Naive thymus-derived CD8-positive, alpha-beta T cell (primary cell): ENCODE measurements at regions of chr2 and their contacts with region 1.

Region 1: DNA sequence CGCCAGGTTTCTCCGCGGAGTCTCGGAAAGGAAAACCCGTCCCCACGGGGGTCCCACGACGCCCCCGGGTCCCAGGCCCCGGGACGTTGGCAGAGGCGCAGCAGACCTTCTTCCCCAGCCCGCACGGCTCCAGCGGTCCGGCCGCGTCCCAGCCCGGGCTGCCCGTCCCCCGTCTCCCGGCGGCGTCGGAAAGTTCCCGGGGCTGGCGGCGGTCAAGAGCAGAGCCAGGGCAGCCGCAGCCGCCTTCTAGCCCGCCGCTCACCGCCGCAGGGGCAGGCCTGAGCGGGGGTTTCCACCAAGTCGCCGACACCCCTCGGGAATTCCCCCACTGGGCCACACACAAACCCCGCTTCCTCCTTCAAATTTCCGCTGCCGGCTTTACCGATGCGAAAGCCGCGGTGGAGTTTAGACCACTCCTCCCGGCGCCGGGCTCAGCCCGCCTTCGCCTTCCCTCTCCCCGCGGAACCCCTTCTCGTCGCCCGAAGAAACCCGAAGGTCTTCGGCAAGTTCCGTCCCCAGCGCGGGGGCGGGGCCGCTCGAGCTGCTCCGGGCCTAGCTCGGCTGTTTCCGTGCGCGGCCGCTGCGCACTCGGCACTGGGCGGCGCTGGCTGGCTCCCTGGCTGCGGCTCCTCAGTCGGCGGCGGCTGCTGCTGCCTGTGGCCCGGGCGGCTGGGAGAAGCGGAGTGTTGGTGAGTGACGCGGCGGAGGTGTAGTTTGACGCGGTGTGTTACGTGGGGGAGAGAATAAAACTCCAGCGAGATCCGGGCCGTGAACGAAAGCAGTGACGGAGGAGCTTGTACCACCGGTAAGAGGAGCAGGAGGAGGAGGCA is at the start of gene CREB1:
- DNase-seq: peak; percentile 99 to 100 (median 100)
- ATAC-seq: peak; percentile 82 to 84
- H3K4me3 Mint-ChIP-seq: peak within 1 kb of the TSS; percentile 85 to 100 (median 96)
- H3K27ac Mint-ChIP-seq: peak within 1 kb of the TSS; percentile 98 to 100 (median 99)
- H3K4me1 Mint-ChIP-seq: peaks cover 31 to 74% (median 60%) of the 10 kb centered on the region in 4 donors
- H3K27me3 Mint-ChIP-seq: peaks cover 0 to 4% (median 0%) of the 10 kb centered on the region in 5 donors
- polyA plus RNA-seq, gene CREB1: 58.5 to 71.4 (median 63.3) TPM

Region 2: DNA sequence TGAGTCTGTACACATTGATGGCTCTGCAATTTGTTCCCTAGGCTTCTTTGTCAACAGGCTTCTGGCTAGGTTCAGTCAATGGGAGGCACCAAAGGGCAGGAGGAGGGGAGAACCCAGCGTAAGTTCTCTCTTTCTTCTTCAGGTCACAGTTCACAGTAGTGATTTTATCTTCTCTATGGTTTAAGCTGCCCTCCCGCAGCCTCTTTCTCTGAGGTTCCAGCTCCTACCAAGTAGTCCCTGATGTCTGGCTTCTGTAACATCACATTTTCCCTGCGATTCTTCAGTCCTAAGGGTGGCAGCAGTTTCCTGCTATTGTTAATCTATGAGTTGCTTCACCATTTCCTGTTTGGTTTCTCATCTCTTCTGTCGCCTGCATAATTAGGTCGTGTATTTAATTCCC is 482.8 kb before region 1 on chr2:
- POLR2A ChIA-PET with region 1: no interaction called
- DNase-seq: peak in 8 of 10 donors; percentile 1 to 60 (median 32)
- ATAC-seq: peak; percentile 87 to 98
- H3K4me3 Mint-ChIP-seq: peak overlapping the region in 5 of 10 donors; percentile 0 to 55 (median 13)
- H3K27ac Mint-ChIP-seq: peak overlapping the region in 8 of 10 donors; percentile 3 to 82 (median 28)
- H3K4me1 Mint-ChIP-seq: peaks cover 5 to 16% (median 10%) of the 10 kb centered on the region in 4 donors
- H3K27me3 Mint-ChIP-seq: peaks cover 0 to 1% (median 0%) of the 10 kb centered on the region in 5 donors

Region 3: GRCh38 chr2:207166039-207166348 is 363.6 kb before region 1 on chr2:
- POLR2A ChIA-PET with region 1: interaction called, 47 read pairs
- DNase-seq: peak; percentile 85 to 99 (median 98)
- ATAC-seq: peak; percentile 83 to 86
- H3K4me3 Mint-ChIP-seq: peak overlapping the region; percentile 91 to 99 (median 96)
- H3K27ac Mint-ChIP-seq: peak overlapping the region; percentile 95 to 100 (median 98)
- H3K4me1 Mint-ChIP-seq: peaks cover 27 to 59% (median 44%) of the 10 kb centered on the region in 4 donors
- H3K27me3 Mint-ChIP-seq: no peaks in the 10 kb centered on the region

Region 4: DNA sequence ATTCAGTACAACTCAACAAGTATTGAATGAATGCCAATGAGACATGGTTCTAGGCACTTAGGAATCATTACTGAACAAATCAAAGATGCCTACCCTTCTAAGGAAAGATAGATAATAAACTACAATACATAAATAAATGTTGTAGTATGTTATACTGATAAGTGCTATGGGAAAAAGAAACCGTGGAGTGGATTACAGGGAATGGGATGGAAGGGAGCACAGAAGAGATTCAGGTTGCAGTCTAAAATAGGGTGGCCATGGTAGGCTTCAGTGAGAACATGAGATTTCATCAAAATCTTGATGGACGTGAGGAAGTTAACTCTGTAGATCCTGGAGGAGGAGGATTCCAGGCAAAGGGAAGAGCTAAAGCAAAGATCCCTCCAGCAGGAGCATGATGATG is 17.7 kb before region 1 on chr2:
- POLR2A ChIA-PET with region 1: interaction called, 20 read pairs
- DNase-seq: no peak
- ATAC-seq: no peak
- H3K4me3 Mint-ChIP-seq: no peak overlapping the region
- H3K27ac Mint-ChIP-seq: peak overlapping the region in 1 of 10 donors; percentile 40
- H3K4me1 Mint-ChIP-seq: peaks cover 2 to 4% (median 3%) of the 10 kb centered on the region in 4 donors
- H3K27me3 Mint-ChIP-seq: no peaks in the 10 kb centered on the region

Region 5: DNA sequence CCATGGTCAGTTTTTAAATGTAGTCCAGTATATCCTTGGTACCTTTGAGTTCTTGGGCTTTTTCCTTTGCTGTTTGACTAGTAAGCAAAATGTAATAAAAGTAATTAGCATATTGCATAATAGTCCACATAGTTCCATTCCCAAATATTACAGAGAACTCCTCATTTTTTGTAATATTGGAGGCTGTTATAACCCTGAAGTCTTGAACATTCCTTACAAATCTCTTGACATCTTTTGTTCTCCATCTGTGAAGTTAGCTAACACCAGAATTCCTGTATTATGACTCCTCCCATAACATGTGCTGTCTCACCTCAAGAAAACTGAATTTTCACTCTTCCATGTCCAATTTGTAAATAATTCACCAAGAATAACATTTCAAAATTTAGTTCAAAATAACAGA is 17.3 kb after region 1 on chr2:
- POLR2A ChIA-PET with region 1: interaction called, 34 read pairs
- DNase-seq: no peak
- ATAC-seq: no peak
- H3K4me3 Mint-ChIP-seq: peak overlapping the region in 2 of 10 donors; percentile 3 to 10
- H3K27ac Mint-ChIP-seq: peak overlapping the region in 2 of 10 donors; percentile 13 to 24
- H3K4me1 Mint-ChIP-seq: peaks cover 24 to 85% (median 72%) of the 10 kb centered on the region in 4 donors
- H3K27me3 Mint-ChIP-seq: no peaks in the 10 kb centered on the region

Region 6: DNA sequence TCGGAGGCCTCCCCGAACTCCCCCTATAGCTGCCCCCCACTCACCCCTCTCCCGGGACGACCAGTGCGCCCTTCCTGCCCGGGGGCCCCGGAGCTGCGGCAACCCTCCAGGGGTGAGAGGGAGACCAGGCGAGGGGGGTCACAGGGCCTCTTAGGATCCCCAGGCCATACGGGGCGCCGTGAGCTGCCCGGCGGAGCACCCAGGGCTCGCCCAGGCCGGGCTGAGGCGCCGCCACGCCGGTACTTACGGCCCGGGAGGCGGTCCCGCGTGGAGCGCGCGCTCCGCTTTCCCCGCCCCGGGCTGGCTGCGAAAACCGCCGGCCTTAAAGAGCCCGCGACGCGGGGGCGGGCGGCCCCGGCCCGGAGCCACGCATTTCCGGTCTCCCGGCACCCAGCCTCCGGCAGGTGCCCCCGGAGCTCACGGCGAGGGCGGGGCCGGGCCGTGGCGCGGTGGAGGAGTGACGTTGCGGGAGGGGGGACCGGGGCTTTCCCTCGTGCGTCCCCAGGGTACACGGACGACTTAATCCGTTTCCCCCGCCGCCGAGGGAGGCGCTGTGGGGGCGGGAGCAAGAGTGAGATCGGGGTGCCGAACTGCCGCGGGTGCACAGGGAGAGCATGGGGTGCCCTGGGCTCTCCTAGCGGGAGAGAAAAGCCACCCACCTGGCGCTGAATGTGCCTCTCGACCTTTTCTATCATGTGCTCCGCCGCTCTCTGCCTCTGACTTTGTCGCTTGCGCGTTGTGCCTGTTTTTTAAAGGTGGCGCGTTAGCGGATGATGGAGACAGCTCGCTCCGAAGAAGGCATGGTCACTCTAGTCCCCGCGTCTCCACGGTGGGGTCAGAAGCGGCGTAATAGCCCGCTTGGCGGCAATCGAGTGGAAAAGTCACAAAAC is 95.7 kb after region 1 on chr2 and contains the start of gene METTL21A:
- POLR2A ChIA-PET with region 1: interaction called, 115 read pairs
- DNase-seq: peak; percentile 89 to 96 (median 94)
- ATAC-seq: peak; percentile 73 to 79
- H3K4me3 Mint-ChIP-seq: peak within 1 kb of the TSS; percentile 83 to 96 (median 94)
- H3K27ac Mint-ChIP-seq: peak within 1 kb of the TSS; percentile 23 to 98 (median 97)
- H3K4me1 Mint-ChIP-seq: peaks cover 19 to 50% (median 46%) of the 10 kb centered on the region in 4 donors
- H3K27me3 Mint-ChIP-seq: no peaks in the 10 kb centered on the region
- polyA plus RNA-seq, gene METTL21A: 34.2 to 50.4 (median 39.4) TPM

Region 7: DNA sequence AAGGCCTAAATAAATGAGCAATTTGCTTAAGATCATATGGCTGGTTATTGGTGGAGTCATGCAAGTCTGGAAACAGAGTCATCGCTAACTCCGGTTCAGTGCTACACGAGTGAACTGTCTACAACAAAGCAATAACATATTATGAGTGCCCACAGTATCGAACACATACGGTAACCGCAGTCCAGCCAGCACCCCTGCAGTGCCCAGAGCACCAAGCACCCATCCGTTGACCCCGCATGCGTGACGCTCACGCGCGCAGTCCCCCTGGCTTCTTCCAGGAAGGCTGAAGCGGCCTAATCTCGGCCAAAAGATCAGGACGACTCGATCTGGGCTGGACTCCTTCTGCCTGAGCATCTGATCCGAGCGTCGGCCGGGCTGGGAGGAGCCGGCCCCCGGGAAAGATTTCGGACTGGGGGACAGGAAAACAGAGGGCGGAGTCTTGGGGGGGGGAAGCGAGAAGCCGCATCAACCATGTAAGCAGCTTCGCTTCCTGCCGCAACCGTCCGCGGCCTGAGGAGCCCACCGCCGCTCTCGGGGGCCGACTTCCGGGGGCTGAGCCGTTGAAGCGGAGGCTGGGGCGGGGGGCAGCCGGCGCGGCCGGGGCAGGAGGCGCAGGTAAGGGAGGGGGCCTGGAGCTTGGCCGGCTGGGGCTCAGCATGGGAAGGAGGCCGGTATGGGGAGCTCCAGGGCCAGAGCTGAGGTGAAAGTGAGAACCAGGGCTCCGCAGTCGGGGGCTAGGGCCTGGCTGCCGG is 736.4 kb after region 1 on chr2 and contains the start of gene PIKFYVE:
- POLR2A ChIA-PET with region 1: interaction called, 11 read pairs
- DNase-seq: peak; percentile 65 to 93 (median 85)
- ATAC-seq: peak; percentile 82 to 83
- H3K4me3 Mint-ChIP-seq: peak within 1 kb of the TSS; percentile 88 to 99 (median 96)
- H3K27ac Mint-ChIP-seq: peak within 1 kb of the TSS; percentile 94 to 99 (median 98)
- H3K4me1 Mint-ChIP-seq: peaks cover 19 to 57% (median 49%) of the 10 kb centered on the region in 4 donors
- H3K27me3 Mint-ChIP-seq: no peaks in the 10 kb centered on the region
- polyA plus RNA-seq, gene PIKFYVE: 5.3 to 6.6 (median 5.4) TPM